B cell (primary cell): ENCODE measurements at regions of chr10 and their contacts with region 1.

Region 1: GRCh38 chr10:77718957-77719356 is 81.3 kb upstream of the KCNMA1 start:
- DNase-seq: no peak
- ATAC-seq: no peak
- H3K4me3 ChIP-seq: no peak overlapping the region
- H3K4me3 Mint-ChIP-seq: no peak overlapping the region
- H3K27ac ChIP-seq: no peak overlapping the region
- H3K27ac Mint-ChIP-seq: no peak overlapping the region
- H3K4me1 ChIP-seq: no peaks in the 10 kb centered on the region
- H3K4me1 Mint-ChIP-seq: peaks cover 3% of the 10 kb centered on the region
- H3K27me3 ChIP-seq: peaks cover 0 to 2% (median 0%) of the 10 kb centered on the region in 4 experiments
- H3K27me3 Mint-ChIP-seq: peaks cover 18% of the 10 kb centered on the region
- CTCF ChIP-seq: no peak

Region 2: DNA sequence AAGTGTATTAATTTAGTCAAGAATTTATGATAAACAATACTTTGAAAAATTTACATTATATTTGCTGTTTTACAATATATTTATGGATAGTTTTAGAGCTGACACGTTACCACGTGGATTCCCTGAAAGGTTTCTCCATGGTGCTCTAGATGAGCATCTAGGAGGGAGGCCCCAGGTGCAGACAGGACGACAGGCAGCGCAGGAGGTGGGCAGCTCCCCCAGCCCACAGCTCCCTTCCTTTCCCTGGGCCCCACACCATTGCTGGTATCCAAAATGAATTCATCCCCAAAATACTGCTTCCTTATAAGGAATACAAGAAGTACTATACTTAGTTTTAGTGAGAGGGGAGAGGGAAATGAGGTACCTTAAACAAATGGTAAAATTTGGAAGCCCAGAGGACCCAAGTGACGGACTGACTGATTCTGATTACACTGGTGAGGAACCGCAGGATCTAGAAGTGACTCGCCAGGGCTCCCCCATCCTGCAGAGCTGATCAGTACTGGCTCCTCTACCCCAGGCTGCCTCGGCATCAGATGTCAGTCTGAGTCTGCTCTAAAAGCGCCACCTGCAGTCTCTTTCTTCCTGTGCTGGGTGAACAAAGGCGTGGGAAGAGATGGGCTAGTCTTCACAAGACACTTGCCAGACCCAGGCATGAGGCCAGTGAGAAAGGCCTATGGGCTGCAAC is 118.4 kb after region 1 on chr10:
- CTCF ChIA-PET with region 1: interaction called, 17 read pairs
- POLR2A ChIA-PET with region 1: no interaction called
- intact Hi-C with region 1: no loop called
- DNase-seq: peak; percentile 48
- ATAC-seq: peak; percentile 71
- H3K4me3 ChIP-seq: no peak overlapping the region
- H3K4me3 Mint-ChIP-seq: peak overlapping the region; percentile 19
- H3K27ac ChIP-seq: no peak overlapping the region
- H3K27ac Mint-ChIP-seq: no peak overlapping the region
- H3K4me1 ChIP-seq: peaks cover 0 to 8% of the 10 kb centered on the region in 2 donors
- H3K4me1 Mint-ChIP-seq: peaks cover 9% of the 10 kb centered on the region
- H3K27me3 ChIP-seq: no peaks in the 10 kb centered on the region
- H3K27me3 Mint-ChIP-seq: no peaks in the 10 kb centered on the region
- CTCF ChIP-seq: peak; percentile 8